ENCODE measurements at regions of chr19 and their contacts with region 1.

Region 1: DNA sequence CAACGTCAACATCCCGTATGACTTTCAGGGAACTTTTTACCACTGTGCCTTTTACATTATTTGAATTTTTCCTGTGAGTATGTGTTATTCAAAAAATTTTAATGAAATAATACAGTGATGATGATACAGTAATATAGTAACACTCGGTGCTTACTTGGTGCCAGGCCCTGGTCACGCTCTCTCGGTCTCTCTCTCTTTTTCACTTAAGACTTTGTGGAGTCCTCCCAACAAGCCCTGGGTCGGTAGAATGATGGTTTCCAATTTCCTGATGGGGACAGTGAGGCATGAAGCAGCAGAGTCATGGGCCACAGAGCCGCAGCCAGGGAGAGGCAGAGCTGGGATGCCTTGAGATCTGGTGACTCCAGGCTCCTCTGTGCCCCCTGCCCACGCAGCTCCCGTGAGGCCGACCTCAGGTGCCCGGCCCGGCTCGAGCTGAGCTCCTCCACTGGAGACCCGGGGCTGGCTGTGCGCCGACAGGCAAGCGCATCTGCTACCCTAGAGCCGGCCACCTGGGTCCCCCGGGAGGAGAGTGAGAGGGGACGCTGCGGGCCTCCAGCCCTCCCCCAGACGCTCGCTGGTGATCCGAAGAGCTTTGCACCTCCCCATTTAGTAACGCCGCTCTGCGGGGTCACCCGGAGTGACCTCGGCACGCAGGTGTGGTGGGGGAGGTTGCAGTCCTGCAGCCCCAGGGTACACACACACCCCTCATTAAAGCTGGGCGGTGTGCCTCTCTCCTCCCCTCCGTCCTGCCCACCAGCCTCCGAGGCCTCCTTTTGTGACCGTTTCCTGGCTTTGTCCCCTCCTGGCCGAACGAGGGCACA is 4.4 kb upstream of the SBK3 start:
- DNase-seq: peak; percentile 89 to 94
- H3K4me3 ChIP-seq: peak overlapping the region; percentile 54
- H3K27ac ChIP-seq: peak overlapping the region; percentile 96
- H3K4me1 ChIP-seq: peaks cover 63% of the 10 kb centered on the region
- H3K27me3 ChIP-seq: no peaks in the 10 kb centered on the region
- CTCF ChIP-seq: no peak

Region 2: DNA sequence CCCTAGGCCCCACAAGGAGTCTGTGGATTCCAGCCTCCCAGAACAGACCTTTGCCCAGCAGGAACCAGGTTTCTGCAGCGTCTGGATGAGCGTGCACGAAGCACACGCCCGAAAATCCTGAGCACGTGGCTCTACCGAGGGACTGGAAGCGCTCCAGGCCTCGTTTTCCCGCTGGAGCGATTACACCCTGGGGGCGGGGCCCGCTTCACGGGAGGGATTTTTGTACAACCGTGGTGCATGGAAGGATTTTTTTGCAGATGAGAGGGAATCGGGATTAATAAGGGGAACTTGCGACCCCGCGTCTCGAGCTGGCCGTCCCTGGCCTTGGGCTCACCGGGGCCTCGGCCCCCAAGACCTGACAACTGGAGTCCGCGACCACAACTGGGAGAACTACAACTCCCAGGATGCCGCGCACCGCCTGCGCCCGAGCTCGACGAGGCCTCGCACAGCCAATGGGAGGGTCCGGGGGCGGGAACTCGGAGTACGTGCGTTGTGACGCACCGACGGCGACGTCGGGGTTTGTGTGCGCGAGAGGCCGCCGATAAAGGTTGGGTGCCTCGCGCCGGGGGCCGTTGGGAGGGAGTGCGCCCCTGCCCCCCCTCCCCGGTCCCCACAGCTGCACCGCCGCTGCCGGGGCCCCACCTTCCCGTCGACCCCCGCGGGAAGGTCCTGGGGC is 73.5 kb before region 1 on chr19 and contains the start of gene ZNF628:
- CTCF ChIA-PET with region 1: no interaction called
- POLR2A ChIA-PET with region 1: interaction called, 4 read pairs
- intact Hi-C with region 1: loop called (anchors 5 kb)
- DNase-seq: peak; percentile 95 to 99
- H3K4me3 ChIP-seq: peak within 1 kb of the TSS; percentile 68
- H3K27ac ChIP-seq: peak within 1 kb of the TSS; percentile 72
- H3K4me1 ChIP-seq: peaks cover 38% of the 10 kb centered on the region
- H3K27me3 ChIP-seq: no peaks in the 10 kb centered on the region
- CTCF ChIP-seq: no peak
- total RNA-seq, gene ZNF628: 17.7 and 19.3 TPM in 2 replicates

Region 3: GRCh38 chr19:55526216-55527196 is 23.2 kb before region 1 on chr19:
- CTCF ChIA-PET with region 1: no interaction called
- POLR2A ChIA-PET with region 1: interaction called, 17 read pairs
- intact Hi-C with region 1: loop called (anchors 1 kb)
- DNase-seq: peak; percentile 84 to 87
- H3K4me3 ChIP-seq: no peak overlapping the region
- H3K27ac ChIP-seq: no peak overlapping the region
- H3K4me1 ChIP-seq: peaks cover 12% of the 10 kb centered on the region
- H3K27me3 ChIP-seq: no peaks in the 10 kb centered on the region
- CTCF ChIP-seq: no peak

Region 4: DNA sequence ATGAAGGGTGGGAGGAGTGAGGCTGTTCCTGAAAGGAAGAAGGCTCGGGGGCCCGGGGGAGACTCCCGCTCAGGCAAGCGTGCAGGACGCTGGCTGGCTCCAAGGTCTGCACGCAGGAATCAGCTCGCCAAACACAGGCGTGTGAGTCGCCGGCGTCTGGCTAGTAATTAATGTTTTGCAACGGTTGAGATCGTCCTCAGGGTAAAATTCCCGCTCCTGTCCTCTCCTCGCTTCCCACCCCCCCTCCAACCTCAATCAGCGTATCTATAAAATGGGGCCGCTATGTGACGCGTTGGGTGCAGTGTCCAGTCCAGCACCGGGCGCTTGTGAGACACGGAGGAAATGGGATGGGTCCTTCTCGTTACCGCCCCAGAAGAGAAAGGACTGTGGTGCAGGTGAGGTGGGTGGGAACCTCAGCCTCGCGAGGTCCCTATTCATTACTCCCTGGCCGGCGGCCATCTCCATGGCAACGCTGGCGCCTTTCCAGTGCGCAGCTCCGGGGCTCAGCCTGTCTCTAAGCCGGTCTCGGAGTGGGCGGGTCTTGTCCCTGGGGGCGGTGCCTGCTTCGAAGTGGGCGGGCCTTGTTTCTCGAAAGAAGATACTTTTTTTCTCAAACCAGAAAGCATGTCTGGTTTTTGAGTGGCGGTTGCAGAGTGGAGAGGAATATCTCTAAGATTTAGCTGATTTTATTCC is 37.4 kb after region 1 on chr19:
- CTCF ChIA-PET with region 1: interaction called, 7 read pairs
- POLR2A ChIA-PET with region 1: interaction called, 20 read pairs
- intact Hi-C with region 1: loop called (anchors 1 kb)
- DNase-seq: peak; percentile 96 to 100
- H3K4me3 ChIP-seq: peak overlapping the region; percentile 57
- H3K27ac ChIP-seq: peak overlapping the region; percentile 11; the same call in 1 of the 2 replicates
- H3K4me1 ChIP-seq: peaks cover 10% of the 10 kb centered on the region
- H3K27me3 ChIP-seq: 0 out of 2 replicates have a peak, but pooled peaks cover 5% of the 10 kb centered on the region
- CTCF ChIP-seq: no peak

Region 5: DNA sequence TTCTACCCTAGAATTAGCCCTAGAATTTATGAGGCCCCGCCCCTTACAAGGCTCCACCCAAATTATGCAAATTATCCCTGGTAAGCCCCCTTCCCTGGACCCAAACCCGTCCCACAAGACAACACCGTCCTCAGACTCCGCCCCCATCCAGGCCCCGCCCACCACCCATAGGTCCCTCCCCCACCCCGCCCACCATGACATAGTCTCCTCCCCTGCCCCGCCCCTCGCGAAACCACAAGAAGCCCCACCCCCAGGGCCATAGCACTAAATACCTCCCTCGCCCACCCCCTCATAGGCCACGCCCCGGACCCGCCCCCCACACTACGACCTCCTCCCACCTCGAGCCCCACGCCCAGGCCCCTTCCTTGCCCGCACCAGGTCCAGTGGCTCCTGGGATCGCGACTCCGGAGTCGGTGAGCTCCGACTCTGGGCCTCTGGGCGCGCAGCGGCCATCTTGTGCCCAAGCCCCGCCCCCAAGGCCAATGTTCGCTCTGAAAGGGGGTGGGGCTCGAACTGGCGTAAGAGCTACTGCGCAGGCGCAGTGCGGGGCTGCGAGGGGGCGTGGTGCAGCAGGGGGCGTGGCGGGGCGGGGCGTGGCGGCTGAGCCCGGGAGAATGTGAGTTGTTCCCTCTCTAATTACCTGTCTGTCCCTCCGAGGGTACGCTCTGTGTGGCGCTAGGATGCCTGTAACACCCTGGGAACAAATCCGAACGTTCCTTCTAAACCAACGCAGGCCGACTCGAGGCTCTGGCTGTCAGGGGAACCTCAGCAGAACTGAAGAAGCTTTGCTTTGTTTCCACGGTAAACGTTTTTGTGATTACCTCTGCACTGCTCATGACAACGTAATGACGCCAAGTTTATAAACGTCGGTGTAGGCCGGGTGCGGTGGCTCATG is 74.6 kb after region 1 on chr19 and contains the start of gene ZNF784:
- CTCF ChIA-PET with region 1: no interaction called
- POLR2A ChIA-PET with region 1: interaction called, 17 read pairs
- intact Hi-C with region 1: no loop called
- DNase-seq: peak; percentile 83 to 94
- H3K4me3 ChIP-seq: peak within 1 kb of the TSS; percentile 62
- H3K27ac ChIP-seq: peak within 1 kb of the TSS; percentile 75
- H3K4me1 ChIP-seq: peaks cover 14% of the 10 kb centered on the region
- H3K27me3 ChIP-seq: no peaks in the 10 kb centered on the region
- CTCF ChIP-seq: no peak
- total RNA-seq, gene ZNF784: 5.4 and 7.7 TPM in 2 replicates